GM13976 (cell line): ENCODE measurements at regions of chr11 and their contacts with region 1.

Region 1: DNA sequence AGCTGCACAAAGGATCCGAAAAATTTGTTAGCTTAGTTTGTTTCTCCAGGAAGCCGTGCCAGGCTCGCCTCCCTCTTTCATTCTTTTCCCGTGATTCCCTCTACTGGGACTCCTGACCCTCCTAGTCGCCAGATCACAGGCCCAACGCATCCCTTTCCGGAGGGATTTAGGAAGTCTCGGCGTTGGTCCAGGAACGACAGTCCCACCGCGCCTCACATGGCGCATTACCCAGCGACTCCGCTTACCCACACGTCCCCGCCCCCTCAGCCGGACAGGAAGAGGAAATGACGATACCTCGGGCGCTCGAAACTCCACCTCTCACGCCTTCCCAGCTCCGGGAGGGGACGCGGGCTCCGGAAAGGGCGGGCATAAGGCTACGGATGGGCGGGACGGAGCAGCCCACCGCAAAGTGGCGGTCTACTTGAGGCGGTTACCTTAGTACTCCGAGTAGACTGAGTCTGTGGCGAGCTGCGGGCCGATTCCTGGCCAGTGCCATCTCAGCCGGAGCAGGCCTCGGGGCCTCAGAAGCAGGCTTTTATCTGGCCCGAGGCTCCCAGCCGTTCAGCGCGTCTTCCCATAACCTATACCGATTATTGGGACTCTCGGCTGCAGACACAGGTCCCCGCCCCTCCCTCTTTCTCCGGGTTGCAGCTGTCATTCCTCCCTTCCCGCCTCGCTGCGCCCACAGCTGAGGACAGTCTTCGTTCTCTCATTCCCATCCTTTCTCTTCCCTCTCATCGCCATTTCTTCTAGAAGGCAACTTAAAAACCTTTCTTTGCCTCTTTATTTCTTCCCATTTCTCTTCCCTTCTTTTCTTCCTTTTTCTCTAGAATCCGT is at the start of gene CCDC15:
- DNase-seq: peak; percentile 93
- CTCF ChIP-seq: no peak

Region 2: DNA sequence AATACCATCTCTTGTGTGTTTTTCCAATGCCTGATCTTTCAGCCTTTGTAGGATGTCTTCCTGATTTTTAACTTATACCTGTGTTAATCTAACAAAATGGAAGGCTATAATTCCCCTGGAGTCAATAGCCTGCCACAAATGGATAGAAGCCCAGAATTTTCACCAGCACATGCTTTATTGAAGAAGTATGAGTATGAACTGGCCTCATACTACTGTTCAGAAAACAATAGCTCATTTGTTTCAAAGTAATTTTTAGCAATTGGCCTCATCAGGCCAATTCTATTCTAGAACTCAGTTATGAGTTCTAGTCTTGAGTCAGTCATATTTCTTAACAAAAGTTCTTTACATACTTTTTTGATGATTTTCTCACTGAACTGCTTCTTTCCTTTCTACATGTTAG is 68.6 kb after region 1 on chr11:
- in situ Hi-C with region 1: no loop called
- DNase-seq: no peak
- CTCF ChIP-seq: no peak

Region 3: GRCh38 chr11:125132596-125132995 is 178.6 kb after region 1 on chr11:
- in situ Hi-C with region 1: loop called (anchors 10 kb)
- DNase-seq: no peak
- CTCF ChIP-seq: no peak

Region 4: GRCh38 chr11:125364121-125364826 is 410.3 kb after region 1 on chr11:
- in situ Hi-C with region 1: loop called (anchors 25 kb)
- DNase-seq: no peak
- CTCF ChIP-seq: no peak